ENCODE measurements at regions of chr4 and their contacts with region 1.

Region 1: DNA sequence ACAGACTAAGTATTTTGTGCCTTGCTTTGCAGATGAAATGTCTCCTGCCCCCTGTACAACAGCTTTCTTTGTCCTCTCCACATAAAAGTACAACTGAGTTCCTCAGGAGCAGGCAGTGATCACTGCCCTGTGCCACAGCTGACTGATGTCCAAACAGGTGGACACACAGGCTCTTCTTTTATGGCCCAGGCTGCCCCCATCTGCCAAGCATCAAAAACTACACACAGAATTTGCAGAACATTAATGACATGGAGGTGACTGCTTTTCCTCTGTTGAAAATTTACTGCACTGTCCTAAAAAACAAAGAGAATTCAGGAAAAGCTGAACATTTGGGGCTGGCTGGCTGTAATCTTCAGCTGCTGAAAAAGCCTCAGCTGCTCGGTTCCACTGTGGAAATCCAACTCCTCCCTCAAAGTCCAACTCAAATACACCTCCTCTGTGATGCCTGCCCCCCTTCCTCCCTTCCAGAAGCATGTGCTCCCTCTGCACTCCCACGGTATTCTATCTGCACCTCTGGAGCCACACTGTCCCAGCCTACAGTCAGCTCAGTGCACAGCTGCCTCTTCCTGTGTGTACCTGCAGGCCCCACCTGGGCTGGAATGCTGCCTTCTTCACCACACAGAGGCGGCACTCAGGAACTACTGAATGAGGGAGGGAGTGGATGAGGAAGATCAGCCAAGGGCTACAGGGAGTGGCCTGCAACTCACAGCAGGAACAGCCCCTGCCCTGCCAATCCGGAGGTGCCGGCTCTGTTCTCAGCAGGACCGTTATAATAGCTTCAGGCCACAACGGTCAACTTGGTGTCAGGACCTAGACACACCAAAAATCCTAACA is 10.3 kb downstream of the AFAP1 start:
- DNase-seq: peak; percentile 38 to 47
- H3K4me3 ChIP-seq: no peak overlapping the region
- H3K4me3 Mint-ChIP-seq: no peak overlapping the region
- H3K27ac Mint-ChIP-seq: no peak overlapping the region
- H3K4me1 ChIP-seq: no peaks in the 10 kb centered on the region
- H3K4me1 Mint-ChIP-seq: peaks cover 13% of the 10 kb centered on the region
- H3K27me3 ChIP-seq: no peaks in the 10 kb centered on the region
- H3K27me3 Mint-ChIP-seq: no peaks in the 10 kb centered on the region
- CTCF ChIP-seq: no peak

Region 2: DNA sequence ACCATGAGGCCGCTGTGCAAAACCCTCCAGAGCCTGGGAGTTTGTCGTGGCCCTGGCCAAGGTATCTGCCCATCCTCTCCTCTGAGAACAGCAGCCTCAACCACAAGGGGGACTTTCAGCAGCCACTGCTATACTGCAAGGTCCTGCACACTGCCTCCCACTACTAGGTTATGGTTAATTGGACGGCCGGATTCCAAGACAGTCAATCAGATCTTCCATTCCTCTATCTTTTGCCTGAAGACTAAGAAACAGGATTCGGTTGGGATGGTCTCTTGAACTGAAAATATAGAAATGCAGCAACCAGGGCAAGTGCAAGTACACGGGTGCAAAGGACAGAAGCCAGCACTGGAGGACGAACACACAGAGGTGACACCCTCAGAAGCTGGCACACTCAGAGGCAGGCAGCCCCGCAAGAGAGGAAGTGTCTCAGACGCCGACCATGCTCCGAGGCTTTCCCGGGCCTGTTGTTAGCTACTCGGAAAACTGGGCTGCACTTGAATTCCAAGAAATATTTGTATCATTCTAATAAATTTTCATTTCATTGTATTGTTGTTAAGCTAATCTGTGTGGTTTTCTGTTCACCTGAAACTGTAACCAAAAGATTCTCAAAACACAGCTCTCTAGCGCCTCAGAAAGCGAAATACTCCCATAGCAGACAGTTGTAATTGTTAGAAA is 53.0 kb before region 1 on chr4:
- CTCF ChIA-PET with region 1: no interaction called
- POLR2A ChIA-PET with region 1: no interaction called
- intact Hi-C with region 1: loop called (anchors 5 kb)
- DNase-seq: peak; percentile 52 to 63
- H3K4me3 ChIP-seq: no peak overlapping the region
- H3K4me3 Mint-ChIP-seq: no peak overlapping the region
- H3K27ac Mint-ChIP-seq: no peak overlapping the region
- H3K4me1 ChIP-seq: peaks cover 4% of the 10 kb centered on the region; the same call in 1 of the 2 replicates
- H3K4me1 Mint-ChIP-seq: peaks cover 15% of the 10 kb centered on the region
- H3K27me3 ChIP-seq: no peaks in the 10 kb centered on the region
- H3K27me3 Mint-ChIP-seq: no peaks in the 10 kb centered on the region
- CTCF ChIP-seq: peak; percentile 28 to 56

Region 3: GRCh38 chr4:7910952-7911578 is 18.3 kb before region 1 on chr4:
- CTCF ChIA-PET with region 1: no interaction called
- POLR2A ChIA-PET with region 1: no interaction called
- intact Hi-C with region 1: no loop called
- DNase-seq: no peak
- H3K4me3 ChIP-seq: no peak overlapping the region
- H3K4me3 Mint-ChIP-seq: no peak overlapping the region
- H3K27ac Mint-ChIP-seq: no peak overlapping the region
- H3K4me1 ChIP-seq: peaks cover 9% of the 10 kb centered on the region; the same call in 1 of the 2 replicates
- H3K4me1 Mint-ChIP-seq: peaks cover 13% of the 10 kb centered on the region
- H3K27me3 ChIP-seq: no peaks in the 10 kb centered on the region
- H3K27me3 Mint-ChIP-seq: no peaks in the 10 kb centered on the region
- CTCF ChIP-seq: no peak

Measured in Caco-2 (cell line).